Activated CD4-positive, alpha-beta memory T cell treated with anti-CD3 and anti-CD28 coated beads for 36 hours (primary cell): ENCODE measurements at regions of chr2 and their contacts with region 1.

Region 1: DNA sequence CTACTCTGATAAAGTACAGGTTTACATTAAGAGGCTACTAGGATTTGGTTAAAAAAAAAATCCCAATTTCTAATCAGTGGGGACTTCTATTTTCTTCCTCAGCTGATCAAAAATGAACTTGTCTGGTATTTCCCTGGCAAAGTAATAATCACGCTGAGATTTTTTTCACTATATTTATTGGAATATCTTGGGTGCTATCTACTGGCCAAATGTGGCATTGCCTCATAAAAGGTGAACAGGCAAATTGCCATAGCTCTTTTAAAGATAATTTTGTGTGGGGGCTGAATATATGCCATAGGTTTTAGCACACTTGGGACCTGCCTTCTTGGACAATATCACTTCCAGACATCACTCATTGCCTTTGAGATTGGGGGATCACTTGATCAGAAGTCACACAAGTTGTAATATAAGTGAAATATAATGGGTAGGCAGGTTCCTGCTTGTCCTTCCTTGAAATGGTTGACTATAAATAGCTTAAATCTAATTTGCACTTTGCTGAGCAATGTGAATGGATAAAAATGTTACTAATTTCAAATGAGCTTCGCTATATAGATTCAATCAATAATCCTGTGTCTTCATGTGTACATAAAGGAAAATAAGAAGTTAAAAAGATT is 7.0 kb upstream of the NXPH2 start:
- DNase-seq: no peak
- H3K4me3 Mint-ChIP-seq: no peak overlapping the region
- H3K27ac Mint-ChIP-seq: no peak overlapping the region
- H3K4me1 Mint-ChIP-seq: no peaks in the 10 kb centered on the region
- H3K27me3 Mint-ChIP-seq: peaks cover 1% of the 10 kb centered on the region

Region 2: GRCh38 chr2:137865954-137866540 is 921.1 kb before region 1 on chr2:
- CTCF ChIA-PET with region 1: interaction called, 16 read pairs
- POLR2A ChIA-PET with region 1: no interaction called
- intact Hi-C with region 1: loop called (anchors 1 kb)
- DNase-seq: peak; percentile 65
- H3K4me3 Mint-ChIP-seq: no peak overlapping the region
- H3K27ac Mint-ChIP-seq: no peak overlapping the region
- H3K4me1 Mint-ChIP-seq: no peaks in the 10 kb centered on the region
- H3K27me3 Mint-ChIP-seq: peaks cover 2% of the 10 kb centered on the region

Region 3: DNA sequence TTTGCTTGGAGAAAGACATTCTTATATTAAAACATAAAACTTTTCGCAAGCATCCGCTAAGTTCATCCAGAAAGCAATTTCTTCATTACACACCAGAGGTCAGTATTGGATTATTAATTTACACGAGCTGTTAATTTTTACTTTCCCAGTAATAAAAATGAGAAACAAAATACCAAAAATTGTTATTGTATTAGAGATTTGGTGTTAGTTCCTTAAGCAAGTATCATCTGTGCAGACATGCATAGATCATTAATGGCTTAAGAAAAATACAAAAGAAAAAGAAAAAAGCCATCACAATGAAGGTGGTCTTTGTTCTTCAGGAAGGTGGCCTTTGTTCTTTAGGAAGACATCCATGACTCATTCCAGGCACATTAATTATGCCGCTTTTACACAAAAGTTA is 876.5 kb before region 1 on chr2:
- CTCF ChIA-PET with region 1: interaction called, 3 read pairs
- POLR2A ChIA-PET with region 1: no interaction called
- intact Hi-C with region 1: loop called (anchors 1 kb)
- DNase-seq: no peak
- H3K4me3 Mint-ChIP-seq: no peak overlapping the region
- H3K27ac Mint-ChIP-seq: no peak overlapping the region
- H3K4me1 Mint-ChIP-seq: no peaks in the 10 kb centered on the region
- H3K27me3 Mint-ChIP-seq: peaks cover 3% of the 10 kb centered on the region

Region 4: GRCh38 chr2:137947728-137948336 is 839.3 kb before region 1 on chr2:
- CTCF ChIA-PET with region 1: interaction called, 3 read pairs
- POLR2A ChIA-PET with region 1: no interaction called
- intact Hi-C with region 1: loop called (anchors 5 kb)
- DNase-seq: peak; percentile 42
- H3K4me3 Mint-ChIP-seq: no peak overlapping the region
- H3K27ac Mint-ChIP-seq: no peak overlapping the region
- H3K4me1 Mint-ChIP-seq: peaks cover 5% of the 10 kb centered on the region
- H3K27me3 Mint-ChIP-seq: no peaks in the 10 kb centered on the region

Region 5: DNA sequence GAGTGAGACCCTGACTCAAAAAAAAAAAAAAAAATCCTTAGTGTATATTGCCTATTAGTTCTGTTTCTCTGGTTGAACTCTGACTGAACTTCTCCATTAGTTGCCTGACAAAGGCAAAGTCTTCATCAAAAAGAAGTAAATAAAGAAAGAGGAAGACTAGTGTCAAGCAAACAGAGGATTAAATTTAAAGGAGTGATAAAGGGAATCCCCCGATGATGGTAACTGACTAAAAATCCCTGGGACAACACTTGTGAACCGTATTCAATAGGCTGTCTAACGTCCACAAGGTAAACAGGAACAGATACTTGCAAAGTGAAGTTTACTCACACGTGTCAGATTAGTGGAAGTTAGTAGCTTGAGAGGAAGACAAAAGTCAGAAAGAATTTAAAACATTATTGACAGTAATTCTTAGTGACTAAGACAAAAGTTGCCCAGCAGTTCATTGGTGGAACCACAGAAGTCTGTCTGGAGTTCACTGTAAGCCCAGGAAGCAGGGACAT is 311.8 kb before region 1 on chr2:
- CTCF ChIA-PET with region 1: no interaction called
- POLR2A ChIA-PET with region 1: no interaction called
- intact Hi-C with region 1: loop called (anchors 10 kb)
- DNase-seq: no peak
- H3K4me3 Mint-ChIP-seq: no peak overlapping the region
- H3K27ac Mint-ChIP-seq: no peak overlapping the region
- H3K4me1 Mint-ChIP-seq: no peaks in the 10 kb centered on the region
- H3K27me3 Mint-ChIP-seq: no peaks in the 10 kb centered on the region